OCI-LY7 (cell line): ENCODE measurements at regions of chr17 and their contacts with region 1.

Region 1: GRCh38 chr17:7834962-7835813 is 1.2 kb downstream of the KDM6B start:
- DNase-seq: peak; percentile 95
- H3K4me3 ChIP-seq: peak overlapping the region; percentile 78
- H3K27ac ChIP-seq: peak overlapping the region; percentile 91
- H3K4me1 ChIP-seq: peaks cover 40% of the 10 kb centered on the region
- CTCF ChIP-seq: peak; percentile 81

Region 2: DNA sequence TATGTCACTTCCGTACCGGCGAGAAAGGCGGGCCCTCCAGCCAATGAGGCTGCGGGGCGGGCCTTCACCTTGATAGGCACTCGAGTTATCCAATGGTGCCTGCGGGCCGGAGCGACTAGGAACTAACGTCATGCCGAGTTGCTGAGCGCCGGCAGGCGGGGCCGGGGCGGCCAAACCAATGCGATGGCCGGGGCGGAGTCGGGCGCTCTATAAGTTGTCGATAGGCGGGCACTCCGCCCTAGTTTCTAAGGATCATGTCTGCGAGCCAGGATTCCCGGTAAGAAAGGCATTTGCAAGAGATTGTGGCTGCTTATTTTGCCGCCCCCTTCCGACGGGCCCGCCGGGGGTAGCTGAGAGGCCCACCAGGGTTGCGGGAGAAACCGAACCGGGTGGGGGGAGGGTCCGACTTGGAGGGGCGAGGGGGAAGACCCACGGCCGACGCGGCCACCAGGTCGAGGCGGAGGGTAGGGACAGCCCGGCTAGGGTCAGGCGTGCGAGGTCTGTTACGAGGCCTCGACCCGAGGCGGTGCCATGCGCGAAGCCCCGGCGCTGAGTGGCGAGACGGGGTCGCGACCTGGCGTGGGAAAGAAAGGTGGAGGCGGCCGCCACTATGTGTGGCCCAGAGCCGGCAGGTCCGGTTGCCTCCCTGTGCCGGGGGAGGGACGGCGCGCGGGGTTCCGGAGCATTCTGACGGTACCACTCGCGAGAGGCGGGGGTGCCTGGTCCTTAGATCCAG is 262.4 kb before region 1 on chr17:
- CTCF ChIA-PET with region 1: no interaction called
- POLR2A ChIA-PET with region 1: no interaction called
- intact Hi-C with region 1: loop called (anchors 5 kb)
- DNase-seq: peak; percentile 99
- H3K4me3 ChIP-seq: peak overlapping the region; percentile 99
- H3K27ac ChIP-seq: peak overlapping the region; percentile 94
- H3K4me1 ChIP-seq: peaks cover 49% of the 10 kb centered on the region
- CTCF ChIP-seq: no peak

Region 3: GRCh38 chr17:7851438-7852256 is 16.5 kb after region 1 on chr17:
- CTCF ChIA-PET with region 1: interaction called, 6 read pairs
- POLR2A ChIA-PET with region 1: interaction called, 10 read pairs
- intact Hi-C with region 1: loop called (anchors 1 kb)
- DNase-seq: peak; percentile 95
- H3K4me3 ChIP-seq: peak overlapping the region; percentile 67
- H3K27ac ChIP-seq: peak overlapping the region; percentile 42
- H3K4me1 ChIP-seq: peaks cover 31% of the 10 kb centered on the region
- CTCF ChIP-seq: peak; percentile 88

Region 4: GRCh38 chr17:7856883-7857723 is 21.9 kb after region 1 on chr17 and contains the start of gene NAA38:
- CTCF ChIA-PET with region 1: interaction called, 6 read pairs
- POLR2A ChIA-PET with region 1: interaction called, 10 read pairs
- intact Hi-C with region 1: loop called (anchors 1 kb)
- DNase-seq: peak; percentile 100
- H3K4me3 ChIP-seq: peak within 1 kb of the TSS; percentile 86
- H3K27ac ChIP-seq: peak within 1 kb of the TSS; percentile 86
- H3K4me1 ChIP-seq: peaks cover 46% of the 10 kb centered on the region
- CTCF ChIP-seq: peak; percentile 68
- total RNA-seq, gene NAA38: 168 and 205 TPM in 2 replicates

Region 5: GRCh38 chr17:7887482-7888183 is 52.4 kb after region 1 on chr17:
- CTCF ChIA-PET with region 1: no interaction called
- POLR2A ChIA-PET with region 1: interaction called, 3 read pairs
- intact Hi-C with region 1: loop called (anchors 1 kb)
- DNase-seq: peak; percentile 90
- H3K4me3 ChIP-seq: peak overlapping the region; percentile 95
- H3K27ac ChIP-seq: peak overlapping the region; percentile 90
- H3K4me1 ChIP-seq: peaks cover 28% of the 10 kb centered on the region
- CTCF ChIP-seq: peak; percentile 18; the same call in 1 of the 2 replicates

Region 6: DNA sequence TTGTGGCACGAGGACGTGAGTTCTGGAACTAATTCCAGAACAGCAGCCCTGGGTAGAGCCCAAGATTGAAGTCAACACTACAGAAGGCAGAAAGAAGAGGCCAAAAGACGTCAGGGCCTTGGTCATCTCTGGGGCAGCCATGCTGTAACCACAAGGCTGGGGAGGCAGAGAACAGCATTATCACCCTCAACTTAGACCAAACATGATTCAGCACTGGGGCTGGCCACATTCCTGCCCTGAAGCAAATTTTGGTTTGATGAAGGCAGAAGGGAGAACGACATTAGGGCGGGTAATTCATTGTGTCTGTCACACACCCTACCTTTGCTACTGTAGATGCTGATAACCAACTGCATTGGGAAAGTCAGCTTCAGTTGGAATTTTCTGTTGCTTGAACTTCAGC is 193.9 kb after region 1 on chr17:
- CTCF ChIA-PET with region 1: no interaction called
- POLR2A ChIA-PET with region 1: no interaction called
- intact Hi-C with region 1: no loop called
- DNase-seq: no peak
- H3K4me3 ChIP-seq: no peak overlapping the region
- H3K27ac ChIP-seq: no peak overlapping the region
- H3K4me1 ChIP-seq: no peaks in the 10 kb centered on the region
- CTCF ChIP-seq: no peak

Region 7: GRCh38 chr17:8156246-8156992 is 321.2 kb after region 1 on chr17:
- CTCF ChIA-PET with region 1: interaction called, 5 read pairs
- POLR2A ChIA-PET with region 1: no interaction called
- intact Hi-C with region 1: loop called (anchors 10 kb)
- DNase-seq: peak; percentile 100
- H3K4me3 ChIP-seq: peak overlapping the region; percentile 75
- H3K27ac ChIP-seq: peak overlapping the region; percentile 80
- H3K4me1 ChIP-seq: peaks cover 60% of the 10 kb centered on the region
- CTCF ChIP-seq: peak; percentile 43; the same call in 1 of the 2 replicates